ENCODE measurements at regions of chr4 and their contacts with region 1.

Region 1: GRCh38 chr4:138114434-138114833 is 127.7 kb downstream of the SLC7A11 start:
- DNase-seq: peak; percentile 36
- H3K4me3 ChIP-seq: no peak overlapping the region
- H3K27ac ChIP-seq: peak overlapping the region; percentile 43
- H3K4me1 ChIP-seq: peaks cover 53% of the 10 kb centered on the region
- H3K27me3 ChIP-seq: no peaks in the 10 kb centered on the region
- CTCF ChIP-seq: no peak
- POLR2A ChIP-seq: no peak

Region 2: DNA sequence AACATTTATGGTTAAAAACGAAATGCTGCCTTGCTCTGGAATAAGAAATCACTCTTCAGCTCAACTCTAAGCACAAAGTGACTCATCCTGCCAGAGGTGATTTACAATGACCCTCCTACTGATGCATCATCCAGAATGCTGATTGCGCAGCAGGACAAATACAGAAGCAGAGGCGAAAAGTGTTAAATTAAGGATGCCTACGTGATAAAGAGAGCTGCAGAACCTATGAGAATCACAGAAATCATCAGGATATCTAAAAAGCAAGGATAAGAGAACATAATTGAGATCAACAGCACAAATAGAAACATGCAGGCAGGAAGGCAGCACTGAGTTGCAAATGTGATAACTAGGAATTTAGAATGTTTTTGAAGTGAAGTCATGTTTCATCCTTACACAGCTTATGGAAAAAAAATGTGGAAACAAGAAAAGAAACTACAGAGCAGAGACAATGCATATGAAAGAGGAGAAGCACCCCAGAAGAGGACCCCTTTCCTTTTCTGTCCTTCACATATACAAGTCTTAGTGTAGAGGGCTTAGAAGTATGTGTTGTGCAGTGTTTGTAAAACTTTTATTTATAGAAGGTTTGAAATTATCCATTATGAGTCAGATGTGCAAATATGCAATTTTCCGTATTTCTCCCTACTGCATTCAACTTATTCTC is 60.7 kb before region 1 on chr4:
- CTCF ChIA-PET with region 1: no interaction called
- POLR2A ChIA-PET with region 1: interaction called, 3 read pairs
- dilution Hi-C with region 1: no loop called
- intact Hi-C with region 1: loop called (anchors 1 kb)
- DNase-seq: peak; percentile 93
- H3K4me3 ChIP-seq: peak overlapping the region in 1 of 3 experiments; percentile 6
- H3K27ac ChIP-seq: peak overlapping the region; percentile 92
- H3K4me1 ChIP-seq: peaks cover 63% of the 10 kb centered on the region
- H3K27me3 ChIP-seq: no peaks in the 10 kb centered on the region
- CTCF ChIP-seq: no peak
- POLR2A ChIP-seq: peak; percentile 64

Region 3: GRCh38 chr4:138174981-138175794 is 60.8 kb after region 1 on chr4:
- CTCF ChIA-PET with region 1: no interaction called
- POLR2A ChIA-PET with region 1: no interaction called
- dilution Hi-C with region 1: no loop called
- intact Hi-C with region 1: loop called (anchors 1 kb)
- DNase-seq: peak; percentile 55
- H3K4me3 ChIP-seq: no peak overlapping the region
- H3K27ac ChIP-seq: no peak overlapping the region
- H3K4me1 ChIP-seq: peaks cover 10% of the 10 kb centered on the region
- H3K27me3 ChIP-seq: no peaks in the 10 kb centered on the region
- CTCF ChIP-seq: no peak
- POLR2A ChIP-seq: no peak

Region 4: DNA sequence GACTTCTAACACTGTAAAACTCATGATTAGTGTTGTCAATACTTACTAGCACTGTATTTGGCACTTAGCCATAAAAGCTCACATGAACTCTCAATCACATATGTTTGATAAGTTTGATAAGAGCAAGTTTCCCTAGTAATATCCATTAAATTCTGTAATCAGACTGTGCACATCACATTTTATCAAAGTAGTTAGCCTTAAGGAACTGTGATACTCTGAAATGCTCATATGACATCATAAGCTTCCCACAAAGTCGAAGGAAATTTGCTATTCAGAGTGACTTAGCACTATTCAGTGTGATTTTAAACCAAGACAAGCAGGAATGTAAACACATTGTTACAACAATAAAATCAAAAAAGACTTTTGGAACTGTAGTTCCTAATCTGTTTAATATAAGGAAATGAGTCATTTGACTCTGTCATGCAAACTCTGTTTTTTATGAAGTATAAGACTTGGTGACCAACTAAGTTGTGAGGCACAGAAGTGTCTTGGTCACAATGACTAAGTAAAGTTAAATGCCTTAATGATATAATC is 121.1 kb after region 1 on chr4:
- CTCF ChIA-PET with region 1: no interaction called
- POLR2A ChIA-PET with region 1: no interaction called
- dilution Hi-C with region 1: no loop called
- intact Hi-C with region 1: loop called (anchors 2 kb)
- DNase-seq: peak; percentile 96
- H3K4me3 ChIP-seq: no peak overlapping the region
- H3K27ac ChIP-seq: peak overlapping the region; percentile 89
- H3K4me1 ChIP-seq: peaks cover 50% of the 10 kb centered on the region
- H3K27me3 ChIP-seq: no peaks in the 10 kb centered on the region
- CTCF ChIP-seq: no peak
- POLR2A ChIP-seq: peak; percentile 44

Region 5: GRCh38 chr4:138927072-138927471 is 812.6 kb after region 1 on chr4:
- CTCF ChIA-PET with region 1: no interaction called
- POLR2A ChIA-PET with region 1: no interaction called
- dilution Hi-C with region 1: no loop called
- intact Hi-C with region 1: no loop called
- DNase-seq: peak; percentile 21
- H3K4me3 ChIP-seq: no peak overlapping the region
- H3K27ac ChIP-seq: no peak overlapping the region
- H3K4me1 ChIP-seq: peaks cover 4% of the 10 kb centered on the region
- H3K27me3 ChIP-seq: no peaks in the 10 kb centered on the region
- CTCF ChIP-seq: no peak
- POLR2A ChIP-seq: no peak

Measured in endothelial cell of umbilical vein (primary cell).